Calu3 (cell line): ENCODE measurements at regions of chr16 and their contacts with region 1.

Region 1: DNA sequence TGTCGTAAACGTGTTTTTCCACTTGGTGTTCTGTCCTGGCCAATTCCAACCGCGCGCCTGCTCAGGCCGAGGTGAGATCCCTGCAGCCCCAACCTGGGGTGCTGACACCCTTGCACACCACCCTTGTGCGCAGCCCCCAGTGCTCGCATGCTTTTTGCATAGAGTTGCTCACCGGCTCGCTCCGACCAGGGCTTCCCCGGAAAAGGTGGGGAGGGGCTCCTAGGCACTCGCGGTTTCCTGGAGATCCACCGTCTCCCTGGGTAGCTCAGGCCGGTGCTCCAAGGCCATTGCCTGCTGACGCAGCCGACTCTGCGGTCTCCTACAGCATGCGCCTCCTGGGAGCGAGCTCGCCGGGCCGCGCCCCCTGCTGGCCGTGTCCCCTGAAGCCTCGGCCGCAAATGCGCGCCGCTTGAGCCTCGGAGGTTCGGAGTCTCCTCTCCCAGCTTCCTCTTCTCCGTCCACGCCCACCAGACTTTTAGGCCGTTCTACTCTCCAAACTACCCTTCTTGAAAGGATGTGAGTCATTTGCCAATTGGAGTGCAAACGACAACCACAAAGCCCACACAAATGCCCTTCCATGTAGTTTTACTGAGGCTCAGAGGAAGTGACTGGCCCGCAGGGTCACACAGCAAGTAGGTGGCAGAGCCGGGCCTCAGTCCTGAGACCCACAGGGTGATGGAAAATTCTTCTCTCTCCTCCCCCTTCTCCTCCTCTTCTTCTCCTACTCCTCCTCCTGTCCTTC is 7.2 kb upstream of the PDP2 start:
- DNase-seq: peak; percentile 98
- H3K4me3 Mint-ChIP-seq: peak overlapping the region; percentile 75
- H3K27ac Mint-ChIP-seq: peak overlapping the region; percentile 56
- H3K4me1 Mint-ChIP-seq: peaks cover 23% of the 10 kb centered on the region
- H3K27me3 Mint-ChIP-seq: no peaks in the 10 kb centered on the region
- CTCF ChIP-seq: peak; percentile 96

Region 2: DNA sequence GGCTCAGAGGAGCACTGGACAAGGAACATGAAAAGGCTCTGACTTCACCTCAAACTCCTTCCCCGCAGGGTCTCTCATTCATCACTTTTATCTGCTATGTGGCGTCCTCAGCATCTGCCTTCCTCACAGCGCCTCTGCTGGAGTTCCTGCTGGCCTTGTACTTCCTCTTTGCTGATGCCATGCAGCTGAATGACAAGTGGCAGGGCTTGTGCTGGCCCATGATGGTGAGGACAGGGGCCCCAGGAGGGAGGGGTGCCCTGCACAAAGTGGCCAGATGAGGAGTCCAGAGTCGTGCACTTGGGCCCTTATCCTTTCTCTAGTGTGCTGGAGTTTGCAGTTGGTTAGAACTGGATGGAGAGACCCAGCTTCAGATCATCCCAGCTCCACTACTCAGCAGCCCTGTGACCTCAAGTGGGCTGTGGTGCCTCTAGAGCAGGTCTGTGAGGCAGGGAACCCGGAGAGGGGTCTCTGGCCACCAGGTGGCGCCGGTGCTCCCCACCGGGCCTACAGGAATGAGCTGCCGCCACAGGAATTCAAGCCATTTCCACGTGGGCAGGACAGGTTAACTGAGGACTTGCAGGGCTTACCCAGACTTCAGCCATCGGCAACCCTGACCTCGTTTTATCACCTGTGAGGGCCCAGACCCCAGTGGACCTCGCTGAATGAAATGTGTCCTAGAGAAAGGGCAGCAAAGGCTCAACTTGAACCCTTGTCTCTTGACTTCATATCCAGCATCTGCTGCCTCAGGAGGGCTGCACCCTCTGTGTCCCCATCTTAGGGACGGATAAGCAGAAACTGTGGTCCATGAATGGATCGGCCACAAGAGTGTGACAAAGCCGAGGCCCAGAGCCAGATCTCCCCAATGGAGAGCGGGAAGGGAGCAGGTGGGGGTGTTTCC is 264.6 kb before region 1 on chr16:
- CTCF ChIA-PET with region 1: interaction called, 35 read pairs
- intact Hi-C with region 1: loop called (anchors 5 kb)
- DNase-seq: peak; percentile 97
- H3K4me3 Mint-ChIP-seq: no peak overlapping the region
- H3K27ac Mint-ChIP-seq: no peak overlapping the region
- H3K4me1 Mint-ChIP-seq: peaks cover 29% of the 10 kb centered on the region
- H3K27me3 Mint-ChIP-seq: no peaks in the 10 kb centered on the region
- CTCF ChIP-seq: peak; percentile 95

Region 3: GRCh38 chr16:66650707-66651473 is 222.2 kb before region 1 on chr16:
- CTCF ChIA-PET with region 1: interaction called, 12 read pairs
- intact Hi-C with region 1: no loop called
- DNase-seq: peak; percentile 87
- H3K4me3 Mint-ChIP-seq: no peak overlapping the region
- H3K27ac Mint-ChIP-seq: no peak overlapping the region
- H3K4me1 Mint-ChIP-seq: peaks cover 9% of the 10 kb centered on the region
- H3K27me3 Mint-ChIP-seq: no peaks in the 10 kb centered on the region
- CTCF ChIP-seq: peak; percentile 96

Region 4: GRCh38 chr16:66660422-66661209 is 212.5 kb before region 1 on chr16:
- CTCF ChIA-PET with region 1: interaction called, 28 read pairs
- intact Hi-C with region 1: no loop called
- DNase-seq: peak; percentile 51
- H3K4me3 Mint-ChIP-seq: peak overlapping the region; percentile 3
- H3K27ac Mint-ChIP-seq: no peak overlapping the region
- H3K4me1 Mint-ChIP-seq: peaks cover 10% of the 10 kb centered on the region
- H3K27me3 Mint-ChIP-seq: no peaks in the 10 kb centered on the region
- CTCF ChIP-seq: no peak

Region 5: DNA sequence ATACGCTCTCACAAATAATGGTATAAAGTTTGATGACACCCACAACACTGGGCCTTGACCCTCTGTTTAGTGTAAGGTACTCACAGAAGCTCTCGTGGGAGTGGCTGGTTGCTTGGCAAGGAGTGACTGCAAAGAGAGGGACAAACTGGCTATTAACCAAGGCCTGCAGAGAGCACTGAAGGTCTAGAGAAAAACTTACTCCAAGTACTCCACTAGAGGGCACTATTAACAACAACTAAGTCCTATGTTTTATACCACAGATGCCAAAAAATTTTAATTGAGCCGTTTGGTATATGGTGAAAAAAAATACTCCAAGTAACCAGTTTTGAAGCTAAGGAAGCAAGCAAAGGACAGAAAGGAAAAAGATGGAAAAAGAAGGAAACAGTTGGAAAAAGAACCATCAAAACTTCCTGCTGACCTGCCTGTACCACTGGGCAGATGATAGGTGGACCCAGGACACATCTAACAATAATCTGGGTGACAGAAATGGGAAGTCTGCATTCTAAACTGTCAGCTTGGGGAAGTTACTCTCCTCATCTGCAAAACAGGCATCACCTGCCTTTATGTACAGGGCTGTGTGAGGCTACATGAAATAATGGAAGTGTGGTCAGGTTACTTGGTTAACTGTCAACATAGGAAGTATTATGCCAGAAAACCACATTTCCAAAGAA is 144.9 kb before region 1 on chr16:
- CTCF ChIA-PET with region 1: interaction called, 5 read pairs
- intact Hi-C with region 1: loop called (anchors 5 kb)
- DNase-seq: no peak
- H3K4me3 Mint-ChIP-seq: no peak overlapping the region
- H3K27ac Mint-ChIP-seq: peak overlapping the region; percentile 4
- H3K4me1 Mint-ChIP-seq: no peaks in the 10 kb centered on the region
- H3K27me3 Mint-ChIP-seq: no peaks in the 10 kb centered on the region
- CTCF ChIP-seq: peak; percentile 61

Region 6: GRCh38 chr16:66830422-66831404 is 42.4 kb before region 1 on chr16 and contains the start of gene NAE1:
- CTCF ChIA-PET with region 1: interaction called, 61 read pairs
- intact Hi-C with region 1: loop called (anchors 2 kb)
- DNase-seq: peak; percentile 95
- H3K4me3 Mint-ChIP-seq: peak within 1 kb of the TSS; percentile 71
- H3K27ac Mint-ChIP-seq: no peak within 1 kb of the TSS
- H3K4me1 Mint-ChIP-seq: no peaks in the 10 kb centered on the region
- H3K27me3 Mint-ChIP-seq: peaks cover 24% of the 10 kb centered on the region
- CTCF ChIP-seq: peak; percentile 97
- total RNA-seq, gene NAE1: 79.4 and 84.5 TPM in 2 replicates